AG04450 (cell line): ENCODE measurements at regions of chr5 and their contacts with region 1.

Region 1: DNA sequence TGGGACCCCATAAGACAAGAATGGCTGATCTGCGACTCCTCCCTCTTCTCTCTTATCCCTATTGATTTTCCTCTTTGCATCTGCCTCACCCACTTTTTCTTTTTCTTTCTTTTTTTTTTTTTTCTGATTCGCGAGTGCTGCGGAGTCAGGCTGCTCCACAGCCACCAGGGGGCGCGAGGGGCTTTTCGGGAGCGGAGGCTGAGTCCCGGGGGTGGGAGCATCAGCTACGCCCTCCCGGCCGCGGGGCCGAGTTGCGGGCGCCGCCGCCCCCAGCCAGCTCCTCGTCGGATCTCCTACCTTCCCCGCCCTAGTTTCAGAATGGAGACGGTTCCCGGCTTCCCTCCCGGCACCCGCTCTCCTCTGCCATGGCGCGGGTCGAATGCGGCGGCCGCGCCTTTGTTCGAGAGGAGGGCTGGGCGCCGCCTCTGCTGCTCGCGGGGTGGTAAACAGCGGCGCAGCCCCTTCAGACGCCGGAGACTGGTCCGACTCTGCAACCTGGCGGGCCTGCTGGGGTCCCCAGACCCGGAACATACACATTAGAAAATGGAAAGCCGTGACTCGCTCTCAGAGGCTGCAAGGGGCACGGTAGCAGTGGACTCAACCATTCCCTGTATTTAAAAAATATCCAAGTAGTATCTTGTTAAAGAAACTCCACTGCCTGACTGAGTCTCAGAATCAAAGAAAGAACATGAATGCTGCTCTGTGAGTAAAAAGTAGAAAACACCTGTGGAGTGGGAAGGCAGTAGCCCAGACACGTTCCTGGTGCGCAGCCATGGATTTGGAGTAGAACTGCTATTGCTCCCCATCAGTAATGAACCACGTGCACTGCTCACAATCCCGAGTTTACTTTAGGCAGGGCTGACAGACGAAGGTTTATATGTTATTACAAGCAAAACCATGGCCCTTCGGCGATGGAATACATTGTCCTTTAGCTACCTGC is 55.7 kb downstream of the DPYSL3 start:
- DNase-seq: peak; percentile 71
- H3K4me3 ChIP-seq: peak overlapping the region; percentile 84
- H3K27ac ChIP-seq: peak overlapping the region; percentile 86
- H3K27me3 ChIP-seq: no peaks in the 10 kb centered on the region
- CTCF ChIP-seq: peak; percentile 95

Region 2: GRCh38 chr5:147359581-147359980 is 94.6 kb before region 1 on chr5:
- CTCF ChIA-PET with region 1: no interaction called
- POLR2A ChIA-PET with region 1: no interaction called
- DNase-seq: no peak
- H3K4me3 ChIP-seq: no peak overlapping the region
- H3K27ac ChIP-seq: no peak overlapping the region
- H3K27me3 ChIP-seq: peaks cover 3% of the 10 kb centered on the region
- CTCF ChIP-seq: no peak

Region 3: GRCh38 chr5:147397616-147398015 is 56.5 kb before region 1 on chr5:
- CTCF ChIA-PET with region 1: interaction called, 15 read pairs
- POLR2A ChIA-PET with region 1: no interaction called
- DNase-seq: no peak
- H3K4me3 ChIP-seq: no peak overlapping the region
- H3K27ac ChIP-seq: peak overlapping the region; percentile 13
- H3K27me3 ChIP-seq: no peaks in the 10 kb centered on the region
- CTCF ChIP-seq: no peak

Region 4: GRCh38 chr5:147431586-147431985 is 22.6 kb before region 1 on chr5:
- CTCF ChIA-PET with region 1: interaction called, 12 read pairs
- POLR2A ChIA-PET with region 1: no interaction called
- DNase-seq: no peak
- H3K4me3 ChIP-seq: no peak overlapping the region
- H3K27ac ChIP-seq: no peak overlapping the region
- H3K27me3 ChIP-seq: no peaks in the 10 kb centered on the region
- CTCF ChIP-seq: no peak

Region 5: DNA sequence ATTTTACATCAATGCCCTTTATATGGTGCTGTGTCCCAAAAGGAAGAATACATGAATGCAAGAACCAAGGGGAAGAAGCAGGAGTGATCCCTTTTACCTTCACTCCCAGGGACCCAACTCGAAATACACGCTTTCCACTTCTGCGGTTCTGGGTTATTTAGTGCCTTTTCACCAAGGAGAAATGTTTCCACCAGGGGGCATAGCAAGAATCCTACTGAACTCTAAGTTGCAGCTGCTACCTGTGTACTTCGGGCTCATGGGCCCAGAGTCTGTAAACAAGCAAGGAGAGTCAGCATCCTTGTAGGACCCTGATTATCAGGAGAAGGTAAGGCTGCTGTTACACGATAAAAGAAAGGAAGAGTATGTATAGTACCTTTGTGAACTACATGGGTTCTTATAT is 10.1 kb after region 1 on chr5:
- CTCF ChIA-PET with region 1: interaction called, 14 read pairs
- POLR2A ChIA-PET with region 1: interaction called, 3 read pairs
- DNase-seq: no peak
- H3K4me3 ChIP-seq: no peak overlapping the region
- H3K27ac ChIP-seq: no peak overlapping the region
- H3K27me3 ChIP-seq: no peaks in the 10 kb centered on the region
- CTCF ChIP-seq: peak; percentile 54

Region 6: DNA sequence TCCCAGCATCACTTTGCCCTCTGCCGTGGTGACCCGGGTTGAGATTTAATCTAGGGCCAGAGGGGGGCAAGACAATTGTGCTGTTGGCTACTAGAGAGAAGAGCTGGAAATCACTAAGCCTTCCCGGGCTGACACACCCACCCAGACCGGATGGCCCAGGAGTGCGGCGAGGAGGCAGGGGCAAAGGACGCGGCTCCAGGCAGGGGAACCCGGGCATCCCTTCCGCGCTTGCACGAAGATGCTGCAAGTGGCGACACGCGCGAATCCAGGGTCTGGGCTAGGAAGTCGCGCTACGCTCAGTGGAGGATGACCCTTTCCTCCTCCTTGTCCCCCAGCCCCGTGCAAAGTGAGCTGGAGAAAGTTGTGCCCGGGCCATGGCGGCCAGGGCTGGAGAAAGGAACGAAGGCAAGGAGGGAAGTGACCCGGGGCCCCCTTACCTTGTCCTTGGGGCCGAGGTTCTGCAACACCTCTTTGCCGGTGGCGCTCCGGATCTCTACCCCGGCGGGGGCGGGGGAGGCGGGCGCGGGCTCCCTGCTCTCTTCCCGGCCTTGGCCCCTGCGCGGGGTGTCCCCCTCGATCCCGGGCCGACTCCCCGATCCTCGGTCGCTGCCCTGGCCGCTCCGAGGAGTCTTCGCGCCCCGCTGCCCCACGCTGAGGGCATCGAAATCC is 55.0 kb after region 1 on chr5:
- CTCF ChIA-PET with region 1: interaction called, 16 read pairs
- POLR2A ChIA-PET with region 1: interaction called, 3 read pairs
- DNase-seq: no peak
- H3K4me3 ChIP-seq: peak overlapping the region; percentile 89
- H3K27ac ChIP-seq: peak overlapping the region; percentile 60
- H3K27me3 ChIP-seq: no peaks in the 10 kb centered on the region
- CTCF ChIP-seq: no peak

Region 7: GRCh38 chr5:147558826-147559225 is 104.7 kb after region 1 on chr5:
- CTCF ChIA-PET with region 1: interaction called, 108 read pairs
- POLR2A ChIA-PET with region 1: interaction called, 3 read pairs
- DNase-seq: peak; percentile 61
- H3K4me3 ChIP-seq: no peak overlapping the region
- H3K27ac ChIP-seq: no peak overlapping the region
- H3K27me3 ChIP-seq: no peaks in the 10 kb centered on the region
- CTCF ChIP-seq: peak; percentile 84

Region 8: DNA sequence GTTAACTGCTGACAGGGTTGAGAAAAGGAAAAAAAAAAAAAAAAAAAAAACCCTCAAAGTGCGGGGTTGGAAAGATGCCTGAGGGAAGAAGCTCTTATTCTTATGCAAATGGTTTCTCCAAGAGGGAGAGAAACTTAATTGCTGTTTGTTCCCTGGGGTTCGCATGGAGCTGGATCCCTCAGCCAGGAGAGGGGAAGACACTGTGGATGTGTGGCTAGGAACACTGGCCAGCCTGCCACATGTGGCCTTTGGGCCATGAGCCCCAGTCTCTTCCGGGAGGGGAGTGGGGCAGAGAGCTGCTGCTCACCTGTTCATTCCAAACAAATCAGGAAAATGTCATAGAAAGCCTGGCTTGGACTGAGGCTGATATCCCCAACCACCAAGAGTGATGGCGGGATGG is 415.0 kb after region 1 on chr5:
- CTCF ChIA-PET with region 1: no interaction called
- POLR2A ChIA-PET with region 1: no interaction called
- DNase-seq: no peak
- H3K4me3 ChIP-seq: no peak overlapping the region
- H3K27ac ChIP-seq: no peak overlapping the region
- H3K27me3 ChIP-seq: no peaks in the 10 kb centered on the region
- CTCF ChIP-seq: no peak